Heart left ventricle (tissue), 16 donors: ENCODE measurements at regions of chr2 and their contacts with region 1.

Region 1: GRCh38 chr2:182077451-182078142 is 91.9 kb downstream of the PPP1R1C start:
- DNase-seq: peak in 2 of 5 donors; percentile 30 to 35
- ATAC-seq: peak; percentile 84 to 96 (median 91)
- H3K4me3 ChIP-seq: no peak overlapping the region
- H3K27ac ChIP-seq: no peak overlapping the region
- H3K4me1 ChIP-seq: peaks cover 0 to 10% (median 3%) of the 10 kb centered on the region in 12 donors
- H3K27me3 ChIP-seq: no peaks in the 10 kb centered on the region
- CTCF ChIP-seq: peak; percentile 48 to 80 (median 70)
- POLR2A ChIP-seq: no peak

Region 2: DNA sequence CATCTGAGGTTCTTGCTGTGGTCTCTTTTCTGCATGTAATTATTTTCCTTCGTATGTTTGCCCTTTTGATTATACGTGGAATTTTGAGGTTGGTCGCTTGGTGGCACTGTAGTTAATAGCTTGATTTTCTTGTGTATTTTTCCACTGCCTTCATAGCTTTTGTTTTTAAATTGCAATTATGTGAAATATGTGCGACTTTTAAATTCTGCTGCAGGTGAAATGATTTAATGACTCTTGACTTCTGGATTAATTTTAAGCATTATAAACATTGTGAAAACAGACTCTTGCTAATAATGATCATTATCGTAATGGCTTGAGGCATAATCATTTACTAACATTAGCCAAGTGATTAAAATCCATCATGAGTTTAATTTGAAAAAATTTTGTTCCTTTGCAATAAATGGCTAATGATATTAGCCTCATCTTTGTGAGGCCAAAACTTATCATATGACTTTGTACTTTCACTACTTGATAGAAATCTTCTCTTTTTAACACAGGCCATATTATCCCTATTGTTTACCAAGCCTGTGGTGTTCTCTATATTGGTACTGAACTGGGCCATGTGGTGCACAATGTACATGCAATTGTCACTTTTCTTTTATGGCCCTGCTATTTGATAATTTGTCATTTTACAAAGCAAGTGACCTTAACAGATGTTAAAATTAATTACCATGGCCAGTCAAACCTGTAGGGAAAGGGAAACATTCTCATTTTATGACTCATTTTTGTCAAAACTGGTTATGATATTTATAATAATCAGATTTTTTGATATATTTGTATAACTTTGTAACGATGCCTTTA is 334.5 kb before region 1 on chr2:
- intact Hi-C with region 1: loop called (anchors 1 to 5 kb)
- DNase-seq: peak in 2 of 5 donors; percentile 18 to 26
- ATAC-seq: peak in 1 of 4 donors; percentile 52
- H3K4me3 ChIP-seq: no peak overlapping the region
- H3K27ac ChIP-seq: no peak overlapping the region
- H3K4me1 ChIP-seq: peaks cover 0 to 6% (median 0%) of the 10 kb centered on the region in 12 donors
- H3K27me3 ChIP-seq: no peaks in the 10 kb centered on the region
- CTCF ChIP-seq: peak; percentile 47 to 82 (median 66)
- POLR2A ChIP-seq: no peak

Region 3: GRCh38 chr2:181924336-181924735 is 153.3 kb before region 1 on chr2:
- intact Hi-C with region 1: loop called in 1 of 10 experiments (anchors 10 kb)
- DNase-seq: no peak
- ATAC-seq: no peak
- H3K4me3 ChIP-seq: no peak overlapping the region
- H3K27ac ChIP-seq: no peak overlapping the region
- H3K4me1 ChIP-seq: peaks cover 0 to 26% (median 4%) of the 10 kb centered on the region in 12 donors
- H3K27me3 ChIP-seq: no peaks in the 10 kb centered on the region
- CTCF ChIP-seq: no peak
- POLR2A ChIP-seq: no peak

Region 4: GRCh38 chr2:181977661-181978350 is 99.8 kb before region 1 on chr2:
- intact Hi-C with region 1: loop called in 4 of 10 experiments (anchors 5 to 10 kb)
- DNase-seq: no peak
- ATAC-seq: no peak
- H3K4me3 ChIP-seq: no peak overlapping the region
- H3K27ac ChIP-seq: no peak overlapping the region
- H3K4me1 ChIP-seq: no peaks in the 10 kb centered on the region
- H3K27me3 ChIP-seq: no peaks in the 10 kb centered on the region
- CTCF ChIP-seq: no peak
- POLR2A ChIP-seq: no peak

Region 5: DNA sequence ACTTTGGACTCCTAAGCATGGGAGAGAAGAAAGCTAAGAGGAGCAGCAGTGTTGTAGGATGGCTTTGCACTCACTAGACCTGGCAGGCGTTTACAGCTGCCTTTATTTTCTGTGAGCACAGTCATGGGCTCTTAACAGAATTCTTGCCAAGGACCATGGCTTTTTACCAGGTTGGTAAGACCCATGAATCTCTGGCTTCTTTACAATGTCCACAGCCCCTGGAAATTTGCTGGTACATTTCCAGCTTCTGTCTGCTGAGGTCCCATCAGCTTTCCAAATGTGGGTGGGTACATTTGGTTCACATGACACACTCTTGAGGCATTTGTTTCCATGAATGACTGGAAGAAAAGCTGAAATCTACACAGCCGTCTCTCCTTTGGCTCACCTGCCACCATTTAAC is 70.7 kb after region 1 on chr2:
- intact Hi-C with region 1: loop called in 1 of 10 experiments (anchors 2 kb)
- DNase-seq: no peak
- ATAC-seq: peak in 2 of 4 donors; percentile 30 to 48
- H3K4me3 ChIP-seq: no peak overlapping the region
- H3K27ac ChIP-seq: no peak overlapping the region
- H3K4me1 ChIP-seq: peaks cover 0 to 20% (median 2%) of the 10 kb centered on the region in 12 donors
- H3K27me3 ChIP-seq: no peaks in the 10 kb centered on the region
- CTCF ChIP-seq: no peak
- POLR2A ChIP-seq: no peak

Region 6: GRCh38 chr2:182291296-182291695 is 213.7 kb after region 1 on chr2:
- intact Hi-C with region 1: no loop called
- DNase-seq: no peak
- ATAC-seq: no peak
- H3K4me3 ChIP-seq: no peak overlapping the region
- H3K27ac ChIP-seq: no peak overlapping the region
- H3K4me1 ChIP-seq: peaks cover 0 to 7% (median 0%) of the 10 kb centered on the region in 12 donors
- H3K27me3 ChIP-seq: no peaks in the 10 kb centered on the region
- CTCF ChIP-seq: no peak
- POLR2A ChIP-seq: no peak